ENCODE measurements at regions of chr1 and their contacts with region 1.

Region 1: GRCh38 chr1:10283318-10283984 is 73.1 kb downstream of the KIF1B start:
- DNase-seq: peak; percentile 63
- H3K4me3 Mint-ChIP-seq: no peak overlapping the region
- H3K27ac Mint-ChIP-seq: peak overlapping the region; percentile 57
- H3K4me1 Mint-ChIP-seq: peaks cover 32% of the 10 kb centered on the region
- H3K27me3 Mint-ChIP-seq: no peaks in the 10 kb centered on the region

Region 2: DNA sequence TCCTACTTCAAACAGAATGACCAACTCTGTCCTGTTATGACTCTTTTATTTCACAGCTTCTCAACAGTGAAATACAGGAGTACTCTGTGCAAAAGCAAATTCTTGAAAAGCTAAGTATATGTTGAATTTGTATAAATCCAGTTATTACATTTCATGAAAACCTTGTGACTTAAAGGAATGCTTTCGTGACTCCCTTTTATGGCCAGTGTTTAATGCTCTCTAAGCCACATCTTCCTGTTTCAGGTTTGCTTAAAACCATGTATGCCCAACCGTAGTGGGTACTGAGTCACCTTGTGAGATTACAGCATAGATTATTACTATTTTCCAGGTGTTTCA is 113.2 kb before region 1 on chr1:
- CTCF ChIA-PET with region 1: no interaction called
- POLR2A ChIA-PET with region 1: no interaction called
- intact Hi-C with region 1: loop called (anchors 1 kb)
- DNase-seq: peak; percentile 35
- H3K4me3 Mint-ChIP-seq: no peak overlapping the region
- H3K27ac Mint-ChIP-seq: peak overlapping the region; percentile 83
- H3K4me1 Mint-ChIP-seq: peaks cover 40% of the 10 kb centered on the region
- H3K27me3 Mint-ChIP-seq: no peaks in the 10 kb centered on the region

Region 3: GRCh38 chr1:10217748-10218441 is 65.6 kb before region 1 on chr1:
- CTCF ChIA-PET with region 1: no interaction called
- POLR2A ChIA-PET with region 1: no interaction called
- intact Hi-C with region 1: loop called (anchors 2 kb)
- DNase-seq: peak; percentile 29
- H3K4me3 Mint-ChIP-seq: no peak overlapping the region
- H3K27ac Mint-ChIP-seq: no peak overlapping the region
- H3K4me1 Mint-ChIP-seq: peaks cover 38% of the 10 kb centered on the region
- H3K27me3 Mint-ChIP-seq: no peaks in the 10 kb centered on the region

Region 4: GRCh38 chr1:10245674-10246073 is 37.8 kb before region 1 on chr1:
- CTCF ChIA-PET with region 1: no interaction called
- POLR2A ChIA-PET with region 1: no interaction called
- intact Hi-C with region 1: loop called (anchors 5 kb)
- DNase-seq: no peak
- H3K4me3 Mint-ChIP-seq: no peak overlapping the region
- H3K27ac Mint-ChIP-seq: no peak overlapping the region
- H3K4me1 Mint-ChIP-seq: peaks cover 5% of the 10 kb centered on the region
- H3K27me3 Mint-ChIP-seq: no peaks in the 10 kb centered on the region

Region 5: GRCh38 chr1:10324627-10325026 is 41.2 kb after region 1 on chr1:
- CTCF ChIA-PET with region 1: no interaction called
- POLR2A ChIA-PET with region 1: no interaction called
- intact Hi-C with region 1: loop called (anchors 5 kb)
- DNase-seq: peak; percentile 46
- H3K4me3 Mint-ChIP-seq: peak overlapping the region; percentile 63
- H3K27ac Mint-ChIP-seq: peak overlapping the region; percentile 82
- H3K4me1 Mint-ChIP-seq: peaks cover 20% of the 10 kb centered on the region
- H3K27me3 Mint-ChIP-seq: no peaks in the 10 kb centered on the region

Region 6: GRCh38 chr1:10387413-10388079 is 104.1 kb after region 1 on chr1:
- CTCF ChIA-PET with region 1: no interaction called
- POLR2A ChIA-PET with region 1: no interaction called
- intact Hi-C with region 1: no loop called
- DNase-seq: no peak
- H3K4me3 Mint-ChIP-seq: no peak overlapping the region
- H3K27ac Mint-ChIP-seq: no peak overlapping the region
- H3K4me1 Mint-ChIP-seq: peaks cover 3% of the 10 kb centered on the region
- H3K27me3 Mint-ChIP-seq: no peaks in the 10 kb centered on the region

Region 7: DNA sequence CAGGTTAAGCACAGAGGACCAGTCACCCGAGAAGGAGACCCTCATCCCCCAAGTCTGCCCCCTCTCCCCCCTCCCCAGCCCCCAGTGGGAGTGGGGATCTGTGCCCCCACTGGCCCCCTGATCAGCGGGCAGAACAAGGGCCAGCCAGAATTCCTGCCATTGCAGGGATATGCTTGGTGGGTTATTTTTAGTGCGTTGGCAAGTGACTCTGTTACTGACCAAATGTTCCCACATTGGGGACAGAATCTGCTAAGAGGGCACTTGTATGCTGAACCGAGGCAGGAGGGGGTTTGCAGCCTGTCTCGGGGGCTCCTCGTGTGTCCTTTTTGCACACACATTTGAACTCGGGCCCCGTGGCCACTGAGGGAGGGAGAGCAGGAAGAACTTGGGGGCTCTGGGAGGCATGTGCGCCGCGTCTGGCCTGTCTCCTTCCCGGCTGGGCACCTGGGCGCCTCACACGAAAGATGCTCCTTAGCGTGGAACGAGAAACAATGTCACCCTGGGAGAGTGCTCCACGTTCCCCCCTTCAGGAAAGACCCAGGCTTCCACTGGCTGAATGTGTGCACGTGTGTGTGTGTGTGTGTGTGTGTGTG is 579.4 kb after region 1 on chr1:
- CTCF ChIA-PET with region 1: no interaction called
- POLR2A ChIA-PET with region 1: no interaction called
- intact Hi-C with region 1: no loop called
- DNase-seq: no peak
- H3K4me3 Mint-ChIP-seq: no peak overlapping the region
- H3K27ac Mint-ChIP-seq: no peak overlapping the region
- H3K4me1 Mint-ChIP-seq: peaks cover 10% of the 10 kb centered on the region
- H3K27me3 Mint-ChIP-seq: peaks cover 41% of the 10 kb centered on the region

Measured in activated CD4-positive, alpha-beta memory T cell treated with anti-CD3 and anti-CD28 coated beads for 36 hours (primary cell).